Activated CD8-positive, alpha-beta T cell treated with anti-CD3 and anti-CD28 coated beads, Interleukin-2, amount 10 ng/mL, durations not matched to agents 7 days and 5 days (primary cell): ENCODE measurements at regions of chr1 and their contacts with region 1.

Region 1: GRCh38 chr1:28248283-28249012 is 10.9 kb upstream of the SESN2 start:
- DNase-seq: peak; percentile 91
- ATAC-seq: peak; percentile 16
- H3K4me3 Mint-ChIP-seq: peak overlapping the region; percentile 35
- H3K27ac Mint-ChIP-seq: peak overlapping the region; percentile 94
- H3K4me1 Mint-ChIP-seq: peaks cover 58% of the 10 kb centered on the region
- H3K27me3 Mint-ChIP-seq: no peaks in the 10 kb centered on the region

Region 2: GRCh38 chr1:28235755-28236655 is 12.4 kb before region 1 on chr1 and contains the start of gene ATP5IF1:
- CTCF ChIA-PET with region 1: interaction called, 39 read pairs
- POLR2A ChIA-PET with region 1: interaction called, 49 read pairs
- DNase-seq: peak; percentile 97
- ATAC-seq: peak; percentile 97
- H3K4me3 Mint-ChIP-seq: no peak within 1 kb of the TSS
- H3K27ac Mint-ChIP-seq: no peak within 1 kb of the TSS
- H3K4me1 Mint-ChIP-seq: peaks cover 22% of the 10 kb centered on the region
- H3K27me3 Mint-ChIP-seq: no peaks in the 10 kb centered on the region
- total RNA-seq, gene ATP5IF1: 204 to 222 TPM

Region 3: DNA sequence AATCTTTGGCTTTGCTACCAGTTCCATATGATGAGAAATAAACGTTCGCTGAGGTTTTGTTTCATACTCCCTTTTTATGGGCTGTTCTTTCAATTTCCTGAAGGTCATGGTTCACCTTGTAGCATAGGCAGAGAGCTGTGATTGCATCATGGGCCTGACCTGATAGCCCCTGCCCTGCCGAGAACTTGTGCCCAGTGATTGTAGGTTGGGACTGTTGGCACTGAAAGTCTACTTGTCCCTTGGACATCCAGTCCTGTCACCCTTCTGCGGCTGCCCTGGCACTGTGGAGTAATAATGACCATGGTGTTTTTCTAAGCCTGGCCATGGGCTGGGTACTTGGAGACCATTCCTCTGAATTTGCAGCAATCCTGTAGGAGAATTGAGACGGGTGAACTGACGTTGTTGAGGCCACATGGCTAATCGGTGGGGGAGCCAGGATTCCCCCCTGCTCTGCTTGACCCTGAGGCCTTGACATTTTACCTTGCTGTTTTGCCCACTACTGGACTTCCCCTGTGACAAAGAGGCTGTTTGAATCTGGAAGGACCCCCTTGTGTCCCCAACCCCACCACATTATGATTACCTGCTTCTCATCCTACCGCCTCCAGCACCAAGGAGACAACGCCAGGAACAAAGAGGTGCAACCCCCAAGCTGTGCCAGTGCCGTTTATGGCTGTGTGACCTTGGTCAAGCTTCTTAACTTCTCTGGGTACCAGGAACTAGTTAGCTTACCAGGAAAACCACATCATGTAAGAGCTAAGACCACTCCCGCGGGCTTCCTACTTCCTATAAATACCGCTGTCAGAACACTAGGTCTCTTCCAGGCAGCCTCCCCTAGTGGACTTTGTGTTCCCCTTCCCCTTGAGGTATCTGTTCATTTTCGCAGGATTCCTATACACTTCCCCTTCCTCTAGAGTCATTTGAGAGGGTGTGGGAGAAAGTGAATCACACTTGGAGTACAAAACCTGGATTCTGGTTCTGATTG is 34.3 kb after region 1 on chr1:
- CTCF ChIA-PET with region 1: interaction called, 11 read pairs
- POLR2A ChIA-PET with region 1: no interaction called
- DNase-seq: no peak
- ATAC-seq: no peak
- H3K4me3 Mint-ChIP-seq: no peak overlapping the region
- H3K27ac Mint-ChIP-seq: peak overlapping the region; percentile 33
- H3K4me1 Mint-ChIP-seq: peaks cover 30% of the 10 kb centered on the region
- H3K27me3 Mint-ChIP-seq: peaks cover 5% of the 10 kb centered on the region

Region 4: GRCh38 chr1:28341591-28341990 is 93.1 kb after region 1 on chr1:
- CTCF ChIA-PET with region 1: interaction called, 19 read pairs
- POLR2A ChIA-PET with region 1: interaction called, 4 read pairs
- DNase-seq: no peak
- ATAC-seq: no peak
- H3K4me3 Mint-ChIP-seq: no peak overlapping the region
- H3K27ac Mint-ChIP-seq: no peak overlapping the region
- H3K4me1 Mint-ChIP-seq: peaks cover 20% of the 10 kb centered on the region
- H3K27me3 Mint-ChIP-seq: no peaks in the 10 kb centered on the region

Region 5: DNA sequence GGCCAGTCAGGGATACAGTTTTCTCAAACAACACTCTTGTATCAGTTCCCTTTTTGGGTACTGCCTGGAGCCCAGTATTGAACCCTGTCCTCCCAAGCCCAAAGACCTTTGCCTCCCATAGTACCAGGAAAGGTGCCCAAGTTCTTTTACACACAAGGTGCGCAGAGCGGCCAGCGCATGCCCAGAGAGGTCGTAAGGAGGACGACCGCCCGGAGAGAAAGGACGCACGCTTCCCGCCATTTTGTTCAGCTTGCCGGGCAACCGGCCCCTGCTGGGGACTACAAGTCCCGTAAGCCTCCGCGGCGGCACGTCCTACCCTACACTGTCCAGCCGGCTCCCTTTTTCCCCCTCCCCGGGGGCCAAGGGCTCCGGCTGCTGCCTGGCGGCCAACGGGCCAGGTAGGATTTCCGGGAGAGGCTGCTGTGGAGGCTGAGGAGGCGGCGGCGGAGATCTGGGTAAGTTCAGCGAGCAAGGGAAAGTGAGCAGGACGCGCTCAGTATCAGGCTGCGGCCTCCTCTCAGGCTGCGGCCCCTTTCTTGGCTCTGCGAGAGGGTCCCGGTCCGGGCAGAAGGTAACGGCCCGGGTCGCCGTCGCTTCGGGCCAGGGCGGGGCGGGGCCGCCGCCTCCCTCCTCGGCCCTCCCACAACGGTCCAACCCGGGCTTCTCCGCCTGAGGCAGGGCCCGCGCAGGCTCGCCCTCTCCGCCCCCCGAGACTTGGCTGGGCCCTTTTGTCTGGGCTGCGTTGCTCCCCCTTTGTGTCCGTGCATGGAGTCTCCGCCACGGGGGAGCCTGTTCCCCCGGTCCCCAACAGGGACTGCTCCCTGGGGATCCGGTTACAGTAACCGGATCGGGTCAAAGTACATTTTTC is 121.2 kb after region 1 on chr1 and contains the start of gene PHACTR4:
- CTCF ChIA-PET with region 1: interaction called, 38 read pairs
- POLR2A ChIA-PET with region 1: interaction called, 10 read pairs
- DNase-seq: peak; percentile 88
- ATAC-seq: peak; percentile 93
- H3K4me3 Mint-ChIP-seq: peak within 1 kb of the TSS; percentile 96
- H3K27ac Mint-ChIP-seq: peak within 1 kb of the TSS; percentile 95
- H3K4me1 Mint-ChIP-seq: peaks cover 33% of the 10 kb centered on the region
- H3K27me3 Mint-ChIP-seq: peaks cover 2% of the 10 kb centered on the region
- total RNA-seq, gene PHACTR4: 29.4 to 30.8 TPM

Region 6: DNA sequence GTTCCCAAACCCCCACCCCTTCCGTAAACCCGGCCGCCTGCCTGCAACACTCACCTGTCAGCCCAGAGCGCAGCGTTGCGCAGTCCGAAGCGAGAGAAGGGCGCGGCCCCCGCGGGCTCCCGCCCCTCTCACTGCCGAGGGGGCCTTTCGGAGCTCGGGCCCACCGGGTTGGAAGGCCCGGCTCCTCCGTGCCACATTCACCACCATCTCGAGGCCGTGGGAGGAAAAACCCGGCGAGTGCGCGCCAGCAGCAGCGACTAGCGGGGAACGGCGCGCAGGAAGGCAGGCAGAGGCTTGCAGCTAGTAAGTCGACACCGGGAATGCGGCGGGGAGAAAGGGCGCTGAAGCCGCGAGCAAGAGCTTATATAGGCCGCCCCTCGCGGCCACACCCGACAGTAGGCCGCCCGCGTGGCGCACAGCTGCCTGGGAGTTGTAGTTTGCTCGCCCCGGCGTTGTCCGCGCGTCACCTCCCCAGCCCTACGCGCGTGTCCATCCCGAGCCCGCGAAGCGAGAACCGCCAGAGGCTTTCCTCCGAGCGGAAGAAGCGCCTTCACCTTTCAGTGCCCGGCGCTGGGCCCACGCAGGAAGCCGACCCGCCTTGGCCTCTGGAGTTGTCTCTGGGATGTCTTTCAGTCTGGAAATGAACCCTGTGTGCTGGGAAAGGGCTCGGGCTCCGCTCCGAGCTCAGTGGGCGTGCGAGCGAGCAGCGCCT is 333.2 kb after region 1 on chr1:
- CTCF ChIA-PET with region 1: interaction called, 17 read pairs
- POLR2A ChIA-PET with region 1: interaction called, 10 read pairs
- DNase-seq: peak; percentile 96
- ATAC-seq: peak; percentile 86
- H3K4me3 Mint-ChIP-seq: peak overlapping the region; percentile 94
- H3K27ac Mint-ChIP-seq: peak overlapping the region; percentile 94
- H3K4me1 Mint-ChIP-seq: peaks cover 36% of the 10 kb centered on the region
- H3K27me3 Mint-ChIP-seq: no peaks in the 10 kb centered on the region